Mammary epithelial cell (primary cell): ENCODE measurements at regions of chr1 and their contacts with region 1.

Region 1: DNA sequence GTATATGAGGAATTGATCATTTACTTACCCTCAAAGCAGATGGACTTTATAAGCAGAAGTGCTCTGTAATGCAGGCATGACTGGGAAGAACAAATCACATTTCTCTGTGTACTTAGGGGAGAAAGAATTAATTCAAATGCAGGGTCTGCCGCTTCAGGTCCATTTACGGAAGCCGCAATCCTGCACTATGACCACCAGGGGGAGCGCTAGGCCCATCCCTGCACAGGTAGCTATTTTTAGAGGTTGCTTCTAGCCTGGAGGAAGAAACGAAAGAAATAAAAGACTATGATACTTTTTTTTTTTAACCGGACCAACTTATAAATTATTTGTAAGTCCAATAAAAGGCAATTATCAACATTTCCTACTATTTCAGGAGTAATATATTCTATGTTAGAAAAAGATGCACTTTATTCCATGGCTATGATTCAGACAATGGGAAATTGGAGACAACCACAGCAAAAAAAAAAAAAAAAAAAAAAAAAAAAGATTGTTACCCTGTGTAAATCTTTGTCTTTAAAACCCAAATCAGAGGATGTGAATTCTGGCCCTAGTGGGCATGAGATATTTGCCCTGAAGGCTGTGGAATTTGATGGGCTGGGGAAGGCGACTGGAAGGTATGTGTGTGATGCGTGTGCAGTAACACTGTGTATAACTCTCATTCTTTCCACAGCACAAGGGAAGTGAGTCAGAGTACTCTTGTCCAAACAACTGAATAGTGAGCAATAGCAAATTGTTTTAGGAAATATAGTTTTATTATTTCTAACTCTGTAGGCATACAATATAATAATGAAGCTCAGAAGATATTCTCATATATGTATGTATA is 12.9 kb upstream of the FYB2 start:
- DNase-seq: peak; percentile 81
- H3K4me3 ChIP-seq: peak overlapping the region in 1 of 3 experiments; percentile 12
- H3K27ac ChIP-seq: peak overlapping the region; percentile 38
- H3K4me1 ChIP-seq: peaks cover 9% of the 10 kb centered on the region
- H3K27me3 ChIP-seq: no peaks in the 10 kb centered on the region
- CTCF ChIP-seq: peak; percentile 89 to 96

Region 2: DNA sequence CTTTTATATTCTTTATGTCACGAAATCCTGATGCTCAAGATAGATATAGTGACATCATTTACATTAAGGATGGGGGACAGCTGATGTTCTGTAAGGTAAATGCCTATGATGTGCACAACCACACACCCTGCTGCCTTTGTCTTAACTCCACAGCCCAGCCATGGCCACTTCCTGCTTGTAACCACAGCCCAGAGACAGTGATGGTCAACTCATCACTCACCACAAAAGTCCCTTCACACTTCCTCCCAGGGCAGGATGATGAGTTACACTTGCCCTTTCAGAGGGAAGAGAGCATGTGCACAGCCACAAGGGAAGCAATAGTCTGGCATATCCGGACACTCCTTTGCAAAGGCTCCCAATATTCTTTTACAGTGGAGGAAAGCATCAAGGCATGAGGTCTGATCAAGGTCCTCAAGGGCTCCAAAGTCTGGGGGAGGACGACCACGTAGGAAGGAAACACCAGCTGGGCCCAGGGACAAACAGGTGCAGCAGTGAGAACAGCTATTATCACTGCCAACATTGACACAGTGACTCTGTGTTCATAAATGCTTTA is 306.5 kb before region 1 on chr1:
- CTCF ChIA-PET with region 1: no interaction called
- dilution Hi-C with region 1: no loop called
- in situ Hi-C with region 1: no loop called
- intact Hi-C with region 1: no loop called
- DNase-seq: peak; percentile 62
- H3K4me3 ChIP-seq: no peak overlapping the region
- H3K27ac ChIP-seq: no peak overlapping the region
- H3K4me1 ChIP-seq: peaks cover 3% of the 10 kb centered on the region
- H3K27me3 ChIP-seq: no peaks in the 10 kb centered on the region
- CTCF ChIP-seq: no peak

Region 3: DNA sequence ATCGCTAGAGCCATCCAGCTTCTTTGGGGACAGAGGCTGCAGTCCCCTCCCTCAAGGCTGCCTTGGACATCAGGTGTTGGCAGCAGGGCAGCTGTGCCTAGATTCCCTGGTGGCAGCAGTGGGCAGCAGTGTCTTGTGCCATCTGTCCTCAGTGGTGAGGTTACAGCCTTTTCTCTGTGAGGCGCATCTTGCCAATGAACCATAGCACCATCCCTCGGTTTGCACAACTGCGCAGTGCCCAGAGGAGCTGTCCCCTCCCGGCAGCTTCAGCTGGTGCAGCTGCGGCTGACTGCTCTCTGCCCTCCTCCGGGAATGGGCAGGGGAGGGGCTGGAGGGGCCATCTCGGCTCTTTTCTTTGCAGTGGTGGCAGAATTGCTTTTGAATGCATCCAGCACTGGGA is 192.8 kb after region 1 on chr1:
- CTCF ChIA-PET with region 1: no interaction called
- dilution Hi-C with region 1: no loop called
- in situ Hi-C with region 1: no loop called
- intact Hi-C with region 1: no loop called
- DNase-seq: no peak
- H3K4me3 ChIP-seq: no peak overlapping the region
- H3K27ac ChIP-seq: no peak overlapping the region
- H3K4me1 ChIP-seq: peaks cover 6% of the 10 kb centered on the region
- H3K27me3 ChIP-seq: no peaks in the 10 kb centered on the region
- CTCF ChIP-seq: no peak

Region 4: GRCh38 chr1:57061369-57061768 is 229.3 kb after region 1 on chr1:
- CTCF ChIA-PET with region 1: no interaction called
- dilution Hi-C with region 1: no loop called
- in situ Hi-C with region 1: no loop called
- intact Hi-C with region 1: loop called (anchors 1 kb)
- DNase-seq: no peak
- H3K4me3 ChIP-seq: no peak overlapping the region
- H3K27ac ChIP-seq: no peak overlapping the region
- H3K4me1 ChIP-seq: no peaks in the 10 kb centered on the region
- H3K27me3 ChIP-seq: peaks cover 2% of the 10 kb centered on the region
- CTCF ChIP-seq: peak in 1 of 2 donors; percentile 27

Region 5: DNA sequence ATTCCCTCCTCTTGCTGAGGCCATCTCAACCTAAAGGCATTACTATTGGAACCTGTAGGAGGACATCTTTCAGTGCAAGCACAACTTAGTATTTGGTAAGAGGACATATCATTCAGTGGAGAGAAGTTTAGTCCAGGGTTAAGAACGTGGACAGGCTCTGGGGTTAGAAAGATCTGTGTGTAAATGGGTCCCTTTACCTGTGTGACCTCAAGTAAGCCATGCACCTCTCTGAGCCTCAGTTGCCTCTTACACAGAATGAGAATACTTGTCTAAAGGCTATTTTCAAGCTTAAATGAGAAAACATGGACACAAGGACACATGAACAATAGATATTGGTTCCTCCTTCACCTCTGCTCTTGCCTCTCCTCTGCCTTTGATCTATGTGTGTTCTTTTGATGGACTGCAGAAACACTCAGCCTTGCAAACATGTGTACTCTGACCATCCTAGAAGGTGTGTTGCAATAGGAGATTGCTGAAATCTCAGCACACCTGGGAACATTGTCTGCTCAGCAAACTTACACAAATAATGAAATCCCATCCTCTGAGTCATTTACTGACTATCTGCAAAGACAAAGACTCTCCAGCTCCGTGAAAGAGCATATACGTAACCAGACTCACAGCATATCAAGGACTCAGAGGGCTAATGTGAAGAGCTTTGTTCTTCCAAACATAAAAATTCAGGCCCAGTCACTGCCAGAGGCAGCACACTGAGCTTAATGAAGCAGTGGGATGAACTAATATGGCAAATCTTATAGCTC is 448.0 kb after region 1 on chr1:
- CTCF ChIA-PET with region 1: no interaction called
- dilution Hi-C with region 1: no loop called
- in situ Hi-C with region 1: no loop called
- intact Hi-C with region 1: loop called (anchors 1 kb)
- DNase-seq: peak; percentile 97
- H3K4me3 ChIP-seq: no peak overlapping the region
- H3K27ac ChIP-seq: peak overlapping the region; percentile 72
- H3K4me1 ChIP-seq: peaks cover 19% of the 10 kb centered on the region
- H3K27me3 ChIP-seq: no peaks in the 10 kb centered on the region
- CTCF ChIP-seq: no peak

Region 6: GRCh38 chr1:57831624-57832023 is 999.5 kb after region 1 on chr1:
- CTCF ChIA-PET with region 1: no interaction called
- dilution Hi-C with region 1: no loop called
- in situ Hi-C with region 1: no loop called
- intact Hi-C with region 1: loop called (anchors 2 kb)
- DNase-seq: peak; percentile 89
- H3K4me3 ChIP-seq: no peak overlapping the region
- H3K27ac ChIP-seq: no peak overlapping the region
- H3K4me1 ChIP-seq: peaks cover 40% of the 10 kb centered on the region
- H3K27me3 ChIP-seq: no peaks in the 10 kb centered on the region
- CTCF ChIP-seq: no peak

Region 7: GRCh38 chr1:58155418-58156123 is 1323.5 kb after region 1 on chr1:
- CTCF ChIA-PET with region 1: no interaction called
- dilution Hi-C with region 1: no loop called
- in situ Hi-C with region 1: loop called in 1 of 2 experiments (anchors 25 kb)
- intact Hi-C with region 1: loop called (anchors 2 kb)
- DNase-seq: peak; percentile 40
- H3K4me3 ChIP-seq: no peak overlapping the region
- H3K27ac ChIP-seq: no peak overlapping the region
- H3K4me1 ChIP-seq: no peaks in the 10 kb centered on the region
- H3K27me3 ChIP-seq: no peaks in the 10 kb centered on the region
- CTCF ChIP-seq: peak; percentile 74 to 83